Endothelial cell of umbilical vein (primary cell): ENCODE measurements at regions of chr11 and their contacts with region 1.

Region 1: DNA sequence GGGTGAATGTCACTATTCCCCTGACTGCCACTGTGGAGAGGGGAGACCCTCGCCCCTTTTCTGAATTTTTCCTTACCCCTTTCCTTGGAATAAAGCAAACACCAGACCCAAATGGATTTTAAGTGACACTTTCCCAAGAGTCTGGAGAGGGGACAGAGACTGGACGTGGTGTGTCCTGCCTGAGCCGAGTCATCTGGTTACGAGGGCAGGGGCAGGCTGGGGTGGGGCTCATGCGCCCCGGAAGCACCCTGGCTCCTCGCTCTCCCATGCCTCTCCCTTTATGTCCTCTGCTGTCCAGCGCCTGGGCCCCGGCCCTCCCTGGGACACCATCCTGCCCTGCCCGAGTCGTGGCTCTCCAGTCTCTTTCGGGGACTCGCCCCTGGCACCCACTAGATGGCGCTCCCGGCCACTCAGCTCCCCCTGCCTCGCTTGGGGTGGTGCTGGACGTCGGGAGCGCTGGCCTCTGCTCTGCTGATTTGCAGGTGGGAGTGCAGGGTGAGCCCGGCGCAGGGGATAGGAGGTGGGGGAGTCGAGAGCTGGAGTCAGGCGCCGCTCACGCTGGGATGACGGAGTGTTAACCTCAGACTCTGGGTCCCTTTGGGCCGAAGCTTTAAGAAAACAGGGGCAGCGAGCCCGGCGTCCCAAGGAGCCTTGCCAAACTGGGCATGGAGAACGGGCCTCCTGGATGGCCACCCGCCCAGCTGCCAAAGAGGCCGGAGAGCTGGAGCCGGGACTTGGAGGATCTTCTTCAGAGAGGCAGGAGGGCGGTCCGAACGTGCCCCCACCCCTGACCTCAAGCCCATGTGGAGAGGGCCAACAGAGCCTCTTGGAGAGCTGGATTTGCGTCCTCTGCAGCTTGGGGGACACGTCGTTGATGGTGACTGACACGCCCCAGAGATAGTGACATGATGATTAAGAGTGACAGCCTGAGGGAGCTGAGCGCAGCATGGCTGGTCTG is 89.9 kb downstream of the RPS6KA4 start:
- DNase-seq: peak; percentile 55
- H3K4me3 ChIP-seq: no peak overlapping the region
- H3K27ac ChIP-seq: no peak overlapping the region
- H3K4me1 ChIP-seq: peaks cover 2% of the 10 kb centered on the region
- H3K27me3 ChIP-seq: peaks cover 7% of the 10 kb centered on the region in 2 experiments
- CTCF ChIP-seq: peak; percentile 83 to 95
- POLR2A ChIP-seq: no peak

Region 2: GRCh38 chr11:64358907-64359711 is 89.8 kb before region 1 on chr11 and contains the start of gene RPS6KA4:
- CTCF ChIA-PET with region 1: interaction called, 11 read pairs
- POLR2A ChIA-PET with region 1: no interaction called
- dilution Hi-C with region 1: no loop called
- intact Hi-C with region 1: no loop called
- DNase-seq: peak; percentile 60
- H3K4me3 ChIP-seq: peak within 1 kb of the TSS; percentile 11 to 91 (median 33)
- H3K27ac ChIP-seq: peak within 1 kb of the TSS; percentile 70
- H3K4me1 ChIP-seq: peaks cover 22% of the 10 kb centered on the region
- H3K27me3 ChIP-seq: no peaks in the 10 kb centered on the region
- CTCF ChIP-seq: no peak
- POLR2A ChIP-seq: peak; percentile 92
- total RNA-seq, gene RPS6KA4: 41.8 and 44.1 TPM in 2 replicates

Region 3: DNA sequence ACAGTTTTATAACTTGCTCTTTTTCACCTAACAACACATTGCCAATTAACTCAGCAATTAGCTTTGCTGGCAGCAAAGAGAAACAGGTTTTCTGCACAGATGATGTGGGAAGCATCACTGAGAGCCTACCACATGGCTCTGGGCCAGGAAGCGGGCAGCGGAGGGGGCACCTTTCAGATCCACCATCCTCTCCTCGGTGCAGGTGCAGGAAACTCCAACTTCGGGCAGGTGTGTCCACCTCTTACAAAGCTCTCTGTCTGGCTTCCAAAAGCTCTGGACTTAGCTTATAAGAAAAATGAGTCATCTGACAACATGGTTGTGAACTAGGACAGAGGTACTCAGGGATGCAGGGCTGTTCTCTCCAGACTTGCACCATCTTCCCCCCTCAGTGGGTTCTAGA is 12.9 kb before region 1 on chr11:
- CTCF ChIA-PET with region 1: interaction called, 44 read pairs
- POLR2A ChIA-PET with region 1: no interaction called
- dilution Hi-C with region 1: no loop called
- intact Hi-C with region 1: no loop called
- DNase-seq: no peak
- H3K4me3 ChIP-seq: no peak overlapping the region
- H3K27ac ChIP-seq: no peak overlapping the region
- H3K4me1 ChIP-seq: no peaks in the 10 kb centered on the region
- H3K27me3 ChIP-seq: peaks cover 2 to 5% of the 10 kb centered on the region in 2 experiments
- CTCF ChIP-seq: no peak
- POLR2A ChIP-seq: no peak

Region 4: DNA sequence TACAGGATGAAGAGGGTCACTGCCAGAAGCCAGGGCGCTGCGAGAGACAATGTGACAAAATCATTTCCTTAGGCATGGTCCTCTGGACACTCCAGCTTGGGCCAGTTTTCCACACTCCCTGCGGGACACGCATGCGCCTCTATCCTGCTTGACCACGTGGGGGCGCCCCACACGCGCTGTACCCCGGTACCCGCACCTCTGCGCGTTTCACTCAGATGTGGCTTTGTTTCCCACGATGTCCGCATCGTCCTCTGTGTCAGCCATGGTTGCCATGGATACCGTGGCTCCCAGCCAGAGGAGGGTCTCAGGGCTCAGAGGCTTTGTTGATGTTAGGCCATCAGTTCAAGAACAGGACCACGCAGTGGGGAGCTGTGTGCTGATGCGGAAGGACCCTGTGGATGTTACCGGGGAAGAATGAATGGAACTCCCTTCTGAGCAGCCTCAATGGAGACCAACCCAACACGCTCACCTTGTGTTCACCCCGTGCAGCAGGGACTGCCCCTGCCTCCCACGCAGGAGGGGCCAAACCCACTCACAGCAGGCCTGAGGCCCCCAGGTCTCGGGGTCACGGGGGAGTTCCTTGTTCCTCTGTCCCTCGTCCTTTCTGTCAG is 41.1 kb after region 1 on chr11:
- CTCF ChIA-PET with region 1: interaction called, 18 read pairs
- POLR2A ChIA-PET with region 1: no interaction called
- dilution Hi-C with region 1: no loop called
- intact Hi-C with region 1: no loop called
- DNase-seq: peak; percentile 29
- H3K4me3 ChIP-seq: no peak overlapping the region
- H3K27ac ChIP-seq: no peak overlapping the region
- H3K4me1 ChIP-seq: no peaks in the 10 kb centered on the region
- H3K27me3 ChIP-seq: peaks cover 4 to 12% of the 10 kb centered on the region in 2 experiments
- CTCF ChIP-seq: peak; percentile 77 to 85
- POLR2A ChIP-seq: no peak

Region 5: GRCh38 chr11:64536396-64536935 is 87.6 kb after region 1 on chr11:
- CTCF ChIA-PET with region 1: no interaction called
- POLR2A ChIA-PET with region 1: no interaction called
- dilution Hi-C with region 1: no loop called
- intact Hi-C with region 1: no loop called
- DNase-seq: no peak
- H3K4me3 ChIP-seq: no peak overlapping the region
- H3K27ac ChIP-seq: no peak overlapping the region
- H3K4me1 ChIP-seq: no peaks in the 10 kb centered on the region
- H3K27me3 ChIP-seq: peaks cover 1 to 2% of the 10 kb centered on the region in 2 experiments
- CTCF ChIP-seq: no peak
- POLR2A ChIP-seq: no peak

Region 6: GRCh38 chr11:64652586-64653387 is 203.9 kb after region 1 on chr11:
- CTCF ChIA-PET with region 1: interaction called, 143 read pairs
- POLR2A ChIA-PET with region 1: no interaction called
- dilution Hi-C with region 1: no loop called
- intact Hi-C with region 1: loop called (anchors 1 kb)
- DNase-seq: peak; percentile 71
- H3K4me3 ChIP-seq: no peak overlapping the region
- H3K27ac ChIP-seq: no peak overlapping the region
- H3K4me1 ChIP-seq: no peaks in the 10 kb centered on the region
- H3K27me3 ChIP-seq: peaks cover 0 to 2% of the 10 kb centered on the region in 2 experiments
- CTCF ChIP-seq: peak; percentile 85 to 89
- POLR2A ChIP-seq: no peak

Region 7: GRCh38 chr11:64723117-64723906 is 274.4 kb after region 1 on chr11 and contains the start of gene NRXN2:
- CTCF ChIA-PET with region 1: no interaction called
- POLR2A ChIA-PET with region 1: no interaction called
- dilution Hi-C with region 1: no loop called
- intact Hi-C with region 1: loop called (anchors 1 kb)
- DNase-seq: peak; percentile 80
- H3K4me3 ChIP-seq: peak within 1 kb of the TSS; percentile 15 to 44 (median 30)
- H3K27ac ChIP-seq: no peak within 1 kb of the TSS
- H3K4me1 ChIP-seq: no peaks in the 10 kb centered on the region
- H3K27me3 ChIP-seq: peaks cover 15 to 16% of the 10 kb centered on the region in 2 experiments
- CTCF ChIP-seq: peak; percentile 97
- POLR2A ChIP-seq: no peak
- total RNA-seq, gene NRXN2: not detected in 2 replicates